ENCODE measurements at regions of chrX and their contacts with region 1.

Region 1: GRCh38 chrX:154397819-154398724 is at the start of gene RPL10:
- DNase-seq: peak; percentile 94 to 97 (median 96)
- H3K4me3 ChIP-seq: peak within 1 kb of the TSS; percentile 79 to 92 (median 81)
- H3K4me3 Mint-ChIP-seq: peak within 1 kb of the TSS; percentile 97
- H3K27ac ChIP-seq: peak within 1 kb of the TSS; percentile 97 to 100
- H3K27ac Mint-ChIP-seq: peak within 1 kb of the TSS; percentile 97 to 99 (median 99)
- H3K4me1 ChIP-seq: peaks cover 20 to 28% of the 10 kb centered on the region in 2 donors
- H3K4me1 Mint-ChIP-seq: peaks cover 15% of the 10 kb centered on the region
- H3K27me3 ChIP-seq: no peaks in the 10 kb centered on the region
- H3K27me3 Mint-ChIP-seq: peaks cover 0 to 9% (median 0%) of the 10 kb centered on the region in 3 donors
- CTCF ChIP-seq: no peak
- polyA plus RNA-seq, gene RPL10: 1,536 to 5,639 (median 1,724) TPM

Region 2: DNA sequence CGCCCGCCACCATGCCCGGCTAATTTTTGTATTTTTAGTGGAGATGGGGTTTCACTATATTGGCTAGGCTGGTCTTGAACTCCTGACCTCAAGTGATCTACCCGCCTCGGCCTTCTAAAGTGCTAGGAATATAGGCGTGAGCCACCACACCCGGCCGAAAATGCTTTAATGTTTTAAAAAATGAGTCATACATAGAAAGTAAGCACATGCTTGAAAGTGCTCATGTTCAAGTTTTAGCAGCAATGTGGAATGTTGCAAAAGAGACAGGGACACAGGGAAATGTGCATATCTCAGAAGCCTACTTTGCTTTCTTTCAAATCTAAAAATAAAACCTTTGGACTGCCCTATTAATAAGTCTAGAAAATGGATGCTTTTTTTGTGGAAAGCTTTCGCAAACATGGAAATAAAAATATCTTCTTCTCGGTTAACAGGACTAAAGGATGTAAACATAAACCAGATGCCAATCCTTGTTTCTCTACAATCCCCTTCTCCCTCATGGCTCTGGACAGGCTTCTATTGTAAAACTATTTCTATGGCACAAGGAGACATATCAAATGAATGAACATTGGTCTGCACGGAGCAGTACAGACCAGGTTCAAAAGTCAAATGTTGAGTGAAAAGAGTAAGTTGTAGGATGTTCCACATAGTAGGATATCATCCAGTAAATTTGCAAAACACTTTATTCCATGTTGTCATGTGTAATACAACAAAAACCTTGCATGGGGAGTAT is 315.5 kb before region 1 on chrX:
- intact Hi-C with region 1: no loop called
- DNase-seq: no peak
- H3K4me3 ChIP-seq: no peak overlapping the region
- H3K4me3 Mint-ChIP-seq: no peak overlapping the region
- H3K27ac ChIP-seq: no peak overlapping the region
- H3K27ac Mint-ChIP-seq: peak overlapping the region in 5 of 7 donors; percentile 16 to 87 (median 66)
- H3K4me1 ChIP-seq: peaks cover 20 to 23% of the 10 kb centered on the region in 2 donors
- H3K4me1 Mint-ChIP-seq: peaks cover 25% of the 10 kb centered on the region
- H3K27me3 ChIP-seq: peaks cover 0 to 22% of the 10 kb centered on the region in 2 donors
- H3K27me3 Mint-ChIP-seq: peaks cover 0 to 24% (median 2%) of the 10 kb centered on the region in 3 donors
- CTCF ChIP-seq: no peak

Region 3: GRCh38 chrX:154351183-154352011 is 46.7 kb before region 1 on chrX:
- intact Hi-C with region 1: no loop called
- DNase-seq: no peak
- H3K4me3 ChIP-seq: no peak overlapping the region
- H3K4me3 Mint-ChIP-seq: no peak overlapping the region
- H3K27ac ChIP-seq: peak overlapping the region; percentile 4 to 26
- H3K27ac Mint-ChIP-seq: peak overlapping the region in 5 of 7 donors; percentile 16 to 62 (median 26)
- H3K4me1 ChIP-seq: peaks cover 30 to 51% of the 10 kb centered on the region in 2 donors
- H3K4me1 Mint-ChIP-seq: peaks cover 21% of the 10 kb centered on the region
- H3K27me3 ChIP-seq: no peaks in the 10 kb centered on the region
- H3K27me3 Mint-ChIP-seq: peaks cover 0 to 4% (median 0%) of the 10 kb centered on the region in 3 donors
- CTCF ChIP-seq: no peak

Region 4: GRCh38 chrX:154436983-154437719 is 39.1 kb after region 1 on chrX and contains the start of gene GDI1:
- intact Hi-C with region 1: loop called in 1 of 2 experiments (anchors 5 kb)
- DNase-seq: peak; percentile 33 to 63 (median 44)
- H3K4me3 ChIP-seq: peak within 1 kb of the TSS; percentile 53 to 75 (median 55)
- H3K4me3 Mint-ChIP-seq: peak within 1 kb of the TSS; percentile 85 to 86
- H3K27ac ChIP-seq: peak within 1 kb of the TSS; percentile 44 to 66
- H3K27ac Mint-ChIP-seq: peak within 1 kb of the TSS; percentile 77 to 89 (median 80)
- H3K4me1 ChIP-seq: peaks cover 16 to 24% of the 10 kb centered on the region in 2 donors
- H3K4me1 Mint-ChIP-seq: peaks cover 21% of the 10 kb centered on the region
- H3K27me3 ChIP-seq: no peaks in the 10 kb centered on the region
- H3K27me3 Mint-ChIP-seq: peaks cover 0 to 15% (median 0%) of the 10 kb centered on the region in 3 donors
- CTCF ChIP-seq: no peak
- polyA plus RNA-seq, gene GDI1: 15.8 to 398 (median 21.3) TPM

Region 5: DNA sequence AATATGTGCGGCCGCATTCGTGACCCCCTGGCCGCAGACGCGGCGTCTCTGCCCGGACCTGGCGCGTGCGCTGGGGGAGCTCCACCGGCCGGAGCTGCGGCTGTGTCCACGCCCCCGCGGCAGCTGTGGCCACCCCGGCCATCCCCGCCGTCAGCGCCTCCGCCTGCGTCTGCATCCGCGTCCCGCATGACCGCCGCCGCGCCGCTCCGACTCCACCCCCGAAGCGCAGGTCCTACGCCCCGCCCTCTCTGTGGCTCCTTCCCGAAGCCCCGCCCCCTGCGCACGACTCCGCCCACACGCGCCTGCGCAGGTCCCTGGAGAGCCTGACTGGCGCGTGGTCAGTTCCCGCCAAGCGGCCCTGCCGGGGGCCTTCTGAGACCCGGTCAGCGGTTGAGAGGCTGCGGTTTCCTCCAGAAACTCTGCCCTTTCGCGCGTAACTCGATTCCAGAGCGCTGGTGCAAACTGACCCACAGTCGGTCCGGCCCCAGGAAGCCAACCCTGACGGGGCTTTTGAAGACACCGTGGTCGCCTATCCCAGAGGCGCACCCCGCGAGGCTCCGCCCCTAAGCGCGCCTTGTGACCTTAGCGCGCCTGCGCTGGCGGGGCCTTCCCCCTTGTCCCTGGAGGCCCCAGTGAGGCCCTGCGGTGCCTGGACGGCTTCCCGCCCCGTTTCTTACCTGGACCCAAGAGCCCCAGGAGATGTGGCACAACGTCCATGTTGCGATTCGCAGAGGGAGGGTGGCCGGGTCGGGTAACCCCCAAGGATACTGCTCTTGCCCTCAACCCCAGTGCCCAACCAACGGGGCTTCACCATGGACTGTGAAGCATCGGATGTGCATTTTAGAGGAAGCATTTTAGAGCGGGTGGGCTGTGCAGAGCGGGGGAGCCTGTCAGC is 80.9 kb after region 1 on chrX and contains the start of gene LAGE3:
- intact Hi-C with region 1: no loop called
- DNase-seq: peak; percentile 84 to 93 (median 90)
- H3K4me3 ChIP-seq: peak within 1 kb of the TSS; percentile 32 to 71 (median 42)
- H3K4me3 Mint-ChIP-seq: peak within 1 kb of the TSS; percentile 70 to 75
- H3K27ac ChIP-seq: peak within 1 kb of the TSS; percentile 82 to 86
- H3K27ac Mint-ChIP-seq: peak within 1 kb of the TSS; percentile 82 to 94 (median 90)
- H3K4me1 ChIP-seq: peaks cover 17 to 20% of the 10 kb centered on the region in 2 donors
- H3K4me1 Mint-ChIP-seq: peaks cover 10% of the 10 kb centered on the region
- H3K27me3 ChIP-seq: no peaks in the 10 kb centered on the region
- H3K27me3 Mint-ChIP-seq: peaks cover 2 to 24% (median 3%) of the 10 kb centered on the region in 3 donors
- CTCF ChIP-seq: no peak
- polyA plus RNA-seq, gene LAGE3: 12.4 to 30.9 (median 18.6) TPM

Region 6: DNA sequence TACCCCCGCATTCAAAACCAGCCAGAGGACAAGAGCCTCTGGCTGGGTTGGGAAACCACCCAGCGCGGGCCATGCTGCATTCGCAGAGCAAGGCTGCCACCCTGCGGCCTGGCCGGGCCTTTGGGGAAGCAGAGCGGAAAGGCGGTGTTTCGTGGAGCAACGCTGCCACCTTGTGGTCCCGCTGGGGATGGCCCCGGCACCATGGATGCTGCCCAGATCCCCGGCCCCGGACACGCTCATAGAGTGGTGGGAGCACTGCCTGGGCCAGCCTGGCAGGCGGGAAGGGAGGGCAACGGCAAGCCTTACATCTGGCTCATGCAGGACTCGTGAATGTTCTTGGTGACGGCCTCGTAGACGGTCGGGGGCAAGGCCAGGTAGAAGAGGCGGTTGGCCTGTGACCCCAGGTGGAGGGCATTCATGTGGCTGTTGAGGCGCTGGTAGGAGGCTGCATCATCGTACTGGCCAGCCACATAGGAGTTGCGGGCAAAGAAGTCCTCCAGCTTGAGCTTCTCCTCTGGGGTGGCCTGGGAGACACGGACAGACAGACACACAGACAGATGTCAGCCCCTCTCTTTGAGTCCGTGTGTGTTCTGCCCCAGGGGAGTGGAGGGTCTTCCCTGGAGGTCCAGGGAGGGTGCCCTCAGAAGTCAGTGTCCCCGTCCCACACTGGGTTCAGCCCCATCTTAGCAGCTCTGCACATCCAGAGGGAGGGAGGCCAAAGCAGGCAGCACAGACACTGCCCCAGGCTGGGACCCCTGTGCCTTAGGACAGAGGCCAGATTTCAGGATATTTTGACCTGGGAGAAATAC is 137.0 kb after region 1 on chrX:
- intact Hi-C with region 1: loop called in 1 of 2 experiments (anchors 5 kb)
- DNase-seq: peak; percentile 82 to 87 (median 86)
- H3K4me3 ChIP-seq: no peak overlapping the region
- H3K4me3 Mint-ChIP-seq: no peak overlapping the region
- H3K27ac ChIP-seq: peak overlapping the region in 1 of 2 donors; percentile 38
- H3K27ac Mint-ChIP-seq: peak overlapping the region in 6 of 7 donors; percentile 37 to 91 (median 72)
- H3K4me1 ChIP-seq: peaks cover 6% of the 10 kb centered on the region in 2 donors
- H3K4me1 Mint-ChIP-seq: peaks cover 2% of the 10 kb centered on the region
- H3K27me3 ChIP-seq: no peaks in the 10 kb centered on the region
- H3K27me3 Mint-ChIP-seq: peaks cover 0 to 10% (median 0%) of the 10 kb centered on the region in 3 donors
- CTCF ChIP-seq: peak; percentile 92